ENCODE measurements at regions of chr6 and their contacts with region 1.

Region 1: DNA sequence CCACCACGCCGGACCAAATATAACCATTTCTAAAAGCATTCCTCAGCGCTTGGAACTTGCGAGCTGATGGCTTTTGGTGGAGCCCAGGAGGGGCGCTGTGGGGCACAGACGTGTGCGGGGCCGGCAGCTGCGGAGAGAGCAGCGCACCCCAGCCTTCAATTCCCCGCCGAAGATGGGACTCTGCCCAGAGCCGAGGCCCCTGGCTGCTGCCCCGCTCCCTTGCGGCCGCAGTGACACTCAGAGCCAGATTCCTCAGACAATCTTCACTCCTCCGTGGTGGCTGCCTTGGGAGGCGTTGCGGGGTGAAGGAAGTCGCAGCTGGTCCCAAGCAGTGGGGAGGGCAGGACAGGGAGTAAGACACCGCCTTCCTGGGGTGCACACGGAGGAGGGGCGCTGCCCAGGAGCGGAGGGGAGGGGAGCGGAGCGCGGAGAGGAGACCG is 87.7 kb downstream of the TMEM242 start:
- DNase-seq: peak in 9 of 10 donors; percentile 30 to 60 (median 40)
- ATAC-seq: peak; percentile 87 to 89
- H3K4me3 Mint-ChIP-seq: peak overlapping the region; percentile 85 to 100 (median 92)
- H3K27ac Mint-ChIP-seq: peak overlapping the region in 8 of 10 donors; percentile 11 to 95 (median 54)
- H3K4me1 Mint-ChIP-seq: peaks cover 9 to 25% (median 15%) of the 10 kb centered on the region in 4 donors
- H3K27me3 Mint-ChIP-seq: peaks cover 23 to 61% (median 46%) of the 10 kb centered on the region in 5 donors

Region 2: GRCh38 chr6:157223021-157223430 is 12.6 kb before region 1 on chr6:
- POLR2A ChIA-PET with region 1: interaction called, 14 read pairs
- DNase-seq: peak in 1 of 10 donors; percentile 13
- ATAC-seq: peak; percentile 20 to 41
- H3K4me3 Mint-ChIP-seq: peak overlapping the region in 7 of 10 donors; percentile 68 to 83 (median 74)
- H3K27ac Mint-ChIP-seq: peak overlapping the region in 3 of 10 donors; percentile 74 to 95 (median 88)
- H3K4me1 Mint-ChIP-seq: peaks cover 22 to 54% (median 40%) of the 10 kb centered on the region in 4 donors
- H3K27me3 Mint-ChIP-seq: peaks cover 0 to 9% (median 3%) of the 10 kb centered on the region in 5 donors

Measured in naive thymus-derived CD8-positive, alpha-beta T cell (primary cell).